Activated CD4-positive, alpha-beta T cell treated with anti-CD3 and anti-CD28 coated beads, Interleukin-2, amount 10 ng/mL, durations not matched to agents 24 days and 14 days (primary cell): ENCODE measurements at regions of chr5 and their contacts with region 1.

Region 1: DNA sequence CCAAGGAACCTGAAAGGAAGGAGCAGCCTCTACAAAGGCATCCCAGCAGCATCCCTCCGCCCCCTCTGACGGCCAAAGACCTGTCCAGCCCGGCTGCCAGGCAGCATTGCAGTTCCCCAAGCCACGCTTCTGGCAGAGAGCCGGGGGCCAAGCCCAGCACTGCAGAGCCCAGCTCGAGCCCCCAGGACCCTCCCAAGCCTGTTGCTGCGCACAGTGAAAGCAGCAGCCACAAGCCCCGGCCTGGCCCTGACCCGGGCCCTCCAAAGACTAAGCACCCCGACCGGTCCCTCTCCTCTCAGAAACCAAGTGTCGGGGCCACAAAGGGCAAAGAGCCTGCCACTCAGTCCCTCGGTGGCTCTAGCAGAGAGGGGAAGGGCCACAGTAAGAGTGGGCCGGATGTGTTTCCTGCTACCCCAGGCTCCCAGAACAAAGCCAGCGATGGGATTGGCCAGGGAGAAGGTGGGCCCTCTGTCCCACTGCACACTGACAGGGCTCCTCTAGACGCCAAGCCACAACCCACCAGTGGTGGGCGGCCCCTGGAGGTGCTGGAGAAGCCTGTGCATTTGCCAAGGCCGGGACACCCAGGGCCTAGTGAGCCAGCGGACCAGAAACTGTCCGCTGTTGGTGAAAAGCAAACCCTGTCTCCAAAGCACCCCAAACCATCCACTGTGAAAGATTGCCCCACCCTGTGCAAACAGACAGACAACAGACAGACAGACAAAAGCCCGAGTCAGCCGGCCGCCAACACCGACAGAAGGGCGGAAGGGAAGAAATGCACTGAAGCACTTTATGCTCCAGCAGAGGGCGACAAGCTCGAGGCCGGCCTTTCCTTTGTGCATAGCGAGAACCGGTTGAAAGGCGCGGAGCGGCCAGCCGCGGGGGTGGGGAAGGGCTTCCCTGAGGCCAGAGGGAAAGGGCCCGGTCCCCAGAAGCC is 30.8 kb downstream of the CD180 start:
- DNase-seq: peak; percentile 96
- H3K4me3 Mint-ChIP-seq: peak overlapping the region; percentile 89
- H3K27ac Mint-ChIP-seq: peak overlapping the region; percentile 96
- H3K4me1 Mint-ChIP-seq: peaks cover 65% of the 10 kb centered on the region
- H3K27me3 Mint-ChIP-seq: no peaks in the 10 kb centered on the region

Region 2: GRCh38 chr5:66828548-66829357 is 337.0 kb before region 1 on chr5:
- intact Hi-C with region 1: loop called (anchors 5 kb)
- DNase-seq: peak; percentile 92
- H3K4me3 Mint-ChIP-seq: peak overlapping the region; percentile 93
- H3K27ac Mint-ChIP-seq: peak overlapping the region; percentile 93
- H3K4me1 Mint-ChIP-seq: peaks cover 56% of the 10 kb centered on the region
- H3K27me3 Mint-ChIP-seq: no peaks in the 10 kb centered on the region

Region 3: GRCh38 chr5:66840511-66841013 is 325.2 kb before region 1 on chr5:
- intact Hi-C with region 1: loop called (anchors 5 kb)
- DNase-seq: peak; percentile 85
- H3K4me3 Mint-ChIP-seq: peak overlapping the region; percentile 57
- H3K27ac Mint-ChIP-seq: peak overlapping the region; percentile 94
- H3K4me1 Mint-ChIP-seq: peaks cover 56% of the 10 kb centered on the region
- H3K27me3 Mint-ChIP-seq: no peaks in the 10 kb centered on the region

Region 4: GRCh38 chr5:67187006-67187715 is 21.4 kb after region 1 on chr5:
- intact Hi-C with region 1: loop called (anchors 2 kb)
- DNase-seq: no peak
- H3K4me3 Mint-ChIP-seq: peak overlapping the region; percentile 4
- H3K27ac Mint-ChIP-seq: peak overlapping the region; percentile 51
- H3K4me1 Mint-ChIP-seq: peaks cover 56% of the 10 kb centered on the region
- H3K27me3 Mint-ChIP-seq: no peaks in the 10 kb centered on the region

Region 5: DNA sequence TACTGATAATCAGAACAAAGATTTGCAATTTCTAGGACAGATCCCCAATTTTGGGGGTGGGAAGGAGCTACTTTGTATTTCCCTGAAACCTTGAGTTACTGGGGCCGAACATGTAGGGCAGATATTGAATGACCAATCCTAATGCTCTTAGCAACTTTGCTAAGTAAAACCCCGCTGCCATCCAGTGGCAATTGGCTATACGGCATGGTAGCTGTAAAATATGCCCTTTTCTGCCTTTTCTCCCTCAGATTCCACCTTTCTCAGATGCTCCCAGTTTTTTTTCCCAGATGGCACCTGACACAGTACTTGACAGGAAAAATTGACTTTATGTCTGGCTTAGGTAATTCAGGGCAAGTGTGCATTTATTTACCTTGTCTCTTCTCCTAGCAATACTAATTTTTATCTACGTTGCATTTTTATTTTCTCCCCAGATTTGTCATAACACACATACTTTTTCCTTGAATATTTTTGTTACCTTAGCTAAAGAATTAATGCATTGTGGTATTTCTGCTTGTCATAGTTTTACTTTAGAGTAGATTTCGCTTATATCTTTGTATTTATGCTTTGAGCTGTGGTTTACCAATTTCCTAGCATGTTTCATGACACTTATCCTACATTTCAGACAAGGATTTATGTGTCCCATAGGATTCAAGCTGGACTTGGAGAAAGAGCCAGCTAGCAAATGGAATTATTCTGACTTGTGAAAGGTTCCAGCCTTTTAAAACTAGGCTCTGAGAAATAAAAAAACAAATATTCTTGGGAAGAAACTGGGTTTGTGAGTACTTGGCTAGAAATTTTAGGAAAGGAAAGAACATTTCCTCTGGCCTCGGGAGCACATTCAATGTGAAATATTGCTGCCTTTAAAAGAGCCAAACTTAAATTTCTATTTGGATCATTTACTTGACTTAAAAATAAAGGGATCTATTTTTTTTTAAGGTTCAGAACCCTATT is 1087.2 kb after region 1 on chr5:
- intact Hi-C with region 1: loop called (anchors 5 kb)
- DNase-seq: peak; percentile 81
- H3K4me3 Mint-ChIP-seq: no peak overlapping the region
- H3K27ac Mint-ChIP-seq: no peak overlapping the region
- H3K4me1 Mint-ChIP-seq: peaks cover 61% of the 10 kb centered on the region
- H3K27me3 Mint-ChIP-seq: no peaks in the 10 kb centered on the region